CD8-positive, alpha-beta T cell (primary cell): ENCODE measurements at regions of chr12 and their contacts with region 1.

Region 1: DNA sequence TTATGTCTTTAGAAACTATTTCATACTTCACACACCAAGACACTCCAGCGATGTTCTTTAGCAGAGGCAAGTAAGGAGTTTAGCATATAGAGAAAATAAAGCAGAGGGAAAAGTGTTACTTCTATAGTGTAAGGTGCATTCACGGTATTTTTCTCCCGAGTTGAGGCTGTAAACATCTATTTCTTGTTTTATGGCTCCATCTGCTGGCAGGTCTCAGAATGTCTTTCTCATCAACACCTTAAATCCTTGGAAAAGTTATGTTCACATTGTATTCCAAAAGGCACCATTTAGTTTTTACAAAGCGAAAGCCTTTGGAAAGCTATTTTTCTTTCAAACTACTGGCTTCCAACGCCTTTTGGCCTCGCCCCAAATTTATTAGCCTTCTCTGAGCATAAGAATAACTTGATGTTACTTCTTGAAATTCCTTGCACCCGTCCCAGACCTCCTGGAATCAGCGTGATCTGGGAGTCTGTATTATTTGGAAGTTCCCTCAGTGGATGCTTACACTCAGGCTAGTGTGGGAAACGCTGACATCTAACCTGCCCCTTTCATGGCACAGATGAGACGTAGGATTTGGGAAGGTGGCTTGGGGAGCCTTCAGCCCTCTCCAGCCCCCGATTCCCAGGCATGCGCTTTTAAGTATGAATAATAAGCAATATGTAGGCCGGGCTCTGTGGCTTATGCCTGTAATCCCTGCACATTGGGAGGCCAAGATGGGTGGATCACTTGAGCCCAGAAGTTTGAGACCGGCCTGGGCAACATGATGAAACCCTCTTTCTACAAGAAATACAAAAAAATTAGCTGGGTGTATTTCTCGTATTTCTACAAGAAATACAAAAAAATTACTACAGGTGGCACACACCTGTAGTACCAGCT is 1.9 kb upstream of the PIWIL1 start:
- DNase-seq: peak in 3 of 9 experiments; percentile 23 to 58 (median 44)
- ATAC-seq: no peak
- H3K4me3 ChIP-seq: no peak overlapping the region
- H3K4me3 Mint-ChIP-seq: no peak overlapping the region
- H3K27ac ChIP-seq: no peak overlapping the region
- H3K27ac Mint-ChIP-seq: no peak overlapping the region
- H3K4me1 ChIP-seq: no peaks in the 10 kb centered on the region
- H3K4me1 Mint-ChIP-seq: no peaks in the 10 kb centered on the region
- H3K27me3 ChIP-seq: no peaks in the 10 kb centered on the region
- H3K27me3 Mint-ChIP-seq: peaks cover 25% of the 10 kb centered on the region
- CTCF ChIP-seq: peak; percentile 69

Region 2: DNA sequence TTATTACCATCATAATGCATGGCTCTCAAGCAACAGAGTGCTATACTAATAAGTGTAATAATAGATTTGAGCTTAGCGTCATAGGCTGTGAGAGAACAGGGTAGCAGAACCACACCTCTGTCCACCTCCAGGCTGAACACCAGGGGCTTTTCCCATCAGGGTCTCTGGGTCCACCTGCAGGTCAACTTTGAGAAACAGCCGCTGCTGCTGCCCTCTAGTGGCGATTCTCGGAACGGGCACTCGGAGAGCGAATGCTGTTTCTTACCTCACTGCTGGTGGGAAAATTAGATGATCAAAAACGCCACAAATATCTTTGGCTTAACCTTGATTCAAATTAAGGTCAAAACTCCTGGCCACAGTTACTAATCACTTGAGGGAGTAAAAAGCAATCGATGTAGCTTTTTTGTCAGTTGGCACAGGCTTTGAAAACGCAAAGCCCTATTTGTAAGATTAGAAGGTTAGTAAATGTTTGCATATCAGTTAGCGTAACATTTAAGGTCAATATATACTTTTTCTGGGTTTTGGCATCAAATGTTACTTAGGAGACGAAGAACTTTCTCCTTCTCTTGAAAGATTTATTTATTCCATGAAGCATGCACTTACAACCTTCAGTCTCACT is 304.1 kb before region 1 on chr12:
- CTCF ChIA-PET with region 1: interaction called, 4 read pairs
- POLR2A ChIA-PET with region 1: no interaction called
- intact Hi-C with region 1: loop called in 1 of 2 experiments (anchors 5 kb)
- DNase-seq: peak; percentile 21 to 70 (median 48)
- ATAC-seq: no peak
- H3K4me3 ChIP-seq: no peak overlapping the region
- H3K4me3 Mint-ChIP-seq: no peak overlapping the region
- H3K27ac ChIP-seq: no peak overlapping the region
- H3K27ac Mint-ChIP-seq: no peak overlapping the region
- H3K4me1 ChIP-seq: no peaks in the 10 kb centered on the region
- H3K4me1 Mint-ChIP-seq: no peaks in the 10 kb centered on the region
- H3K27me3 ChIP-seq: no peaks in the 10 kb centered on the region
- H3K27me3 Mint-ChIP-seq: peaks cover 18% of the 10 kb centered on the region
- CTCF ChIP-seq: peak; percentile 91

Region 3: GRCh38 chr12:130041983-130042812 is 293.6 kb before region 1 on chr12:
- CTCF ChIA-PET with region 1: interaction called, 28 read pairs
- POLR2A ChIA-PET with region 1: no interaction called
- intact Hi-C with region 1: loop called in 1 of 2 experiments (anchors 1 kb)
- DNase-seq: peak in 5 of 9 experiments; percentile 9 to 35 (median 31)
- ATAC-seq: no peak
- H3K4me3 ChIP-seq: no peak overlapping the region
- H3K4me3 Mint-ChIP-seq: no peak overlapping the region
- H3K27ac ChIP-seq: no peak overlapping the region
- H3K27ac Mint-ChIP-seq: no peak overlapping the region
- H3K4me1 ChIP-seq: no peaks in the 10 kb centered on the region
- H3K4me1 Mint-ChIP-seq: no peaks in the 10 kb centered on the region
- H3K27me3 ChIP-seq: peaks cover 0 to 14% of the 10 kb centered on the region in 2 experiments
- H3K27me3 Mint-ChIP-seq: peaks cover 51% of the 10 kb centered on the region
- CTCF ChIP-seq: peak; percentile 49

Region 4: GRCh38 chr12:130049666-130050065 is 286.1 kb before region 1 on chr12:
- CTCF ChIA-PET with region 1: interaction called, 28 read pairs
- POLR2A ChIA-PET with region 1: no interaction called
- intact Hi-C with region 1: loop called in 1 of 2 experiments (anchors 1 kb)
- DNase-seq: no peak
- ATAC-seq: no peak
- H3K4me3 ChIP-seq: no peak overlapping the region
- H3K4me3 Mint-ChIP-seq: no peak overlapping the region
- H3K27ac ChIP-seq: no peak overlapping the region
- H3K27ac Mint-ChIP-seq: no peak overlapping the region
- H3K4me1 ChIP-seq: peaks cover 4% of the 10 kb centered on the region
- H3K4me1 Mint-ChIP-seq: peaks cover 2% of the 10 kb centered on the region
- H3K27me3 ChIP-seq: peaks cover 0 to 11% of the 10 kb centered on the region in 2 experiments
- H3K27me3 Mint-ChIP-seq: peaks cover 34% of the 10 kb centered on the region
- CTCF ChIP-seq: no peak

Region 5: GRCh38 chr12:130514149-130514551 is 178.4 kb after region 1 on chr12:
- CTCF ChIA-PET with region 1: no interaction called
- POLR2A ChIA-PET with region 1: no interaction called
- intact Hi-C with region 1: no loop called
- DNase-seq: no peak
- ATAC-seq: no peak
- H3K4me3 ChIP-seq: no peak overlapping the region
- H3K4me3 Mint-ChIP-seq: no peak overlapping the region
- H3K27ac ChIP-seq: no peak overlapping the region
- H3K27ac Mint-ChIP-seq: no peak overlapping the region
- H3K4me1 ChIP-seq: no peaks in the 10 kb centered on the region
- H3K4me1 Mint-ChIP-seq: no peaks in the 10 kb centered on the region
- H3K27me3 ChIP-seq: no peaks in the 10 kb centered on the region
- H3K27me3 Mint-ChIP-seq: peaks cover 4% of the 10 kb centered on the region
- CTCF ChIP-seq: no peak